Activated B cell treated with CpG ODN at 0.5 μM for 24 hours (primary cell): ENCODE measurements at regions of chr2 and their contacts with region 1.

Region 1: DNA sequence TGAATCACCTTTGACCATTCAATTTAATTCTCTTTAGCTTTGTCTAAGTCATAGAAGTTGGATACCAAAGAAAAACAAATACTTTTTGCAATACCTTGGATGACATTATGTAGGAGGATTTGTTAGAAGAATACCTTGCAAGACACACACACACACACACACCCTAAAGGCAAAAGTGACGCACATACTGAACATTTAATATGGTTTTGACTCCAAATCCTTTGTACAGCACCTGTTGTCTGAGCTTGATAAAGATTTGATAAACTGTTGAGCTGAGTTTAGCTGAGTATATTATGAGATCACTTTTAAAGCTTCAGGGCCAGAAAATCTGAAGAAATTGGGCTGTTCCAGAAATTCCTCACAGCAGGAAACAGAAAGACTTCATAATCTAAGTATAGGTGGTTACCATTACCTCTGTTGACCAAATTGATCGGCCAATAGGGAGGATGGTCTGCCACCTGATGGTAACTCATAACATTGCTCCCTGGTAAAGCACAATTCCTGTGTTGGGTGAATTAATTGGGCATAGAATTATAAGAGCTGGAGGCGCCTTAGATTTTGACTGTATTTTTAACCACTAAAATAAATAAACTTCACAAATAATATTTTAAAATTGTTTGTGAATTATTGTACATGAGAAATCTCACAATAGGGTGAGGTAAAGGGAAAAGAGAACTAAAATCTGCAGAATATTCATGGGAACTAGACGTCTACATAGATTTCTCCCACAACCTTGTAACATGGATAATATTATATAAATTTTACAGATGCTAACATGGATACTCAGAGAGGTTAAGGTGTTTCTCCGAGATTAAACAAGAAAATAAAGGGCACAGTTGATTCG is 21.9 kb upstream of the RPIA start:
- DNase-seq: no peak
- ATAC-seq: peak; percentile 88
- H3K4me3 Mint-ChIP-seq: no peak overlapping the region
- H3K27ac Mint-ChIP-seq: no peak overlapping the region
- H3K4me1 Mint-ChIP-seq: peaks cover 5% of the 10 kb centered on the region
- H3K27me3 Mint-ChIP-seq: no peaks in the 10 kb centered on the region
- CTCF ChIP-seq: no peak

Region 2: DNA sequence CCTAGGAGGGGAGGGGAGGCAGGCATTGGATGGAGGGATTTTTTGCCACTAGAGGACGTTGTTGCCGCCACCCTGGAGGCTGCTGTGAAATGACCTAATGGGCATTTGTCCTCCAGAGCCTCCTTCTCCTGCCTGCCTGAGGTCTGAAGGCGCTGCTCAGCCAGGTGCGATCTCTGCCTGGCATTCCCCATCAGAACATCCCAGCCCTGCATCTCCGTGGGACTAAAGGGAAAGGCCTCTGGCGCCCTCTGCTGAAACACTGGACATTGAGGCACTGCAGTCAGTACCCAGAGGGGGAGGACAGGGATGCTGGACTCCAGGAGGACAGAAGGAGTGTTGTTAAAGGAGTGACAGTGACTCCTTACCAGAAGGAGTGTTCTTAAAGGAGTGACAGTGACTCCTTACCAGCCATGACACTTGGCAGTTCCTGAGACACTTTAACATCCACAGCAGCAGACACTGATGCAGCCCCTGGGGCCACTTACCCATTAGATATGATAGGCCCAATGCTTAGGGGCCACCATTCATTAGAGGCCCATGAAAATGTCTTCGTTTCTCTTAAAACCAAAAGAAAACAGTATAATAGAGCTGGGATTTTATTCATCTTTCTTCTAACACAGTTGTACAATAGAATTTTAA is 482.4 kb before region 1 on chr2:
- CTCF ChIA-PET with region 1: no interaction called
- POLR2A ChIA-PET with region 1: no interaction called
- intact Hi-C with region 1: loop called (anchors 2 kb)
- DNase-seq: no peak
- ATAC-seq: peak; percentile 50
- H3K4me3 Mint-ChIP-seq: no peak overlapping the region
- H3K27ac Mint-ChIP-seq: no peak overlapping the region
- H3K4me1 Mint-ChIP-seq: peaks cover 14% of the 10 kb centered on the region
- H3K27me3 Mint-ChIP-seq: peaks cover 17% of the 10 kb centered on the region
- CTCF ChIP-seq: no peak

Region 3: DNA sequence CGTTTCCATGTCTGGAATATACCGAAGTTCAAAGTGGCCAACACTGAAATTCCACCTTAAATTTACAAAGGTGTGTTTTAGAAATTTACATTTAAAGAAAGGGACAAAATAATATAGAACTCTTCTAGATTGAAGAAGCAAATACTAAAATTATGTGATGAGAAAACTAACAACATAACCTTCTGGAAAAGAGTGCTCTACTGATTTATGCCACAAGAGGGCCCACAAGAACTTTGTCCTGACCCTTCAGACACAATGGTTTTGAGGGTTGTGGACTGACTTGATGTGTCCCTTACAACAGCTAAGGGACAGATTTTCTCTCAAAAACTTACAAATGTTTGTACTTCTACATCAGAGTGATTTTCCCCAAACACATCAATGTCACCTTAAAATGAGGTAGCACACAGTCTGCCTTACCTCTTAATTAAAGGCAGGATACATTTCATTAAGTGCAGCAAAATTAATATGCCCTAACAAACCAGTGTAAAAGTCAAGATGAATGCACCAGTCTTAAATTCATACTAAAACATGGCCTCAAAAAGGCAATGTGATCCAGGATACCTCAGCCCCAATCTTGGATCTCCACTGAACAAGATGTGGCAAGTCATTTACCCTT is 78.5 kb before region 1 on chr2:
- CTCF ChIA-PET with region 1: interaction called, 281 read pairs
- POLR2A ChIA-PET with region 1: interaction called, 5 read pairs
- intact Hi-C with region 1: loop called (anchors 1 kb)
- DNase-seq: no peak
- ATAC-seq: peak; percentile 88
- H3K4me3 Mint-ChIP-seq: no peak overlapping the region
- H3K27ac Mint-ChIP-seq: peak overlapping the region; percentile 70
- H3K4me1 Mint-ChIP-seq: peaks cover 25% of the 10 kb centered on the region
- H3K27me3 Mint-ChIP-seq: no peaks in the 10 kb centered on the region
- CTCF ChIP-seq: peak; percentile 35

Region 4: GRCh38 chr2:88600038-88600465 is 69.5 kb before region 1 on chr2:
- CTCF ChIA-PET with region 1: interaction called, 281 read pairs
- POLR2A ChIA-PET with region 1: interaction called, 3 read pairs
- intact Hi-C with region 1: no loop called
- DNase-seq: no peak
- ATAC-seq: peak; percentile 94
- H3K4me3 Mint-ChIP-seq: peak overlapping the region; percentile 67
- H3K27ac Mint-ChIP-seq: peak overlapping the region; percentile 90
- H3K4me1 Mint-ChIP-seq: peaks cover 89% of the 10 kb centered on the region
- H3K27me3 Mint-ChIP-seq: no peaks in the 10 kb centered on the region
- CTCF ChIP-seq: no peak

Region 5: GRCh38 chr2:88659538-88659916 is 10.1 kb before region 1 on chr2:
- CTCF ChIA-PET with region 1: interaction called, 11 read pairs
- POLR2A ChIA-PET with region 1: no interaction called
- intact Hi-C with region 1: no loop called
- DNase-seq: no peak
- ATAC-seq: no peak
- H3K4me3 Mint-ChIP-seq: no peak overlapping the region
- H3K27ac Mint-ChIP-seq: no peak overlapping the region
- H3K4me1 Mint-ChIP-seq: no peaks in the 10 kb centered on the region
- H3K27me3 Mint-ChIP-seq: no peaks in the 10 kb centered on the region
- CTCF ChIP-seq: no peak

Region 6: DNA sequence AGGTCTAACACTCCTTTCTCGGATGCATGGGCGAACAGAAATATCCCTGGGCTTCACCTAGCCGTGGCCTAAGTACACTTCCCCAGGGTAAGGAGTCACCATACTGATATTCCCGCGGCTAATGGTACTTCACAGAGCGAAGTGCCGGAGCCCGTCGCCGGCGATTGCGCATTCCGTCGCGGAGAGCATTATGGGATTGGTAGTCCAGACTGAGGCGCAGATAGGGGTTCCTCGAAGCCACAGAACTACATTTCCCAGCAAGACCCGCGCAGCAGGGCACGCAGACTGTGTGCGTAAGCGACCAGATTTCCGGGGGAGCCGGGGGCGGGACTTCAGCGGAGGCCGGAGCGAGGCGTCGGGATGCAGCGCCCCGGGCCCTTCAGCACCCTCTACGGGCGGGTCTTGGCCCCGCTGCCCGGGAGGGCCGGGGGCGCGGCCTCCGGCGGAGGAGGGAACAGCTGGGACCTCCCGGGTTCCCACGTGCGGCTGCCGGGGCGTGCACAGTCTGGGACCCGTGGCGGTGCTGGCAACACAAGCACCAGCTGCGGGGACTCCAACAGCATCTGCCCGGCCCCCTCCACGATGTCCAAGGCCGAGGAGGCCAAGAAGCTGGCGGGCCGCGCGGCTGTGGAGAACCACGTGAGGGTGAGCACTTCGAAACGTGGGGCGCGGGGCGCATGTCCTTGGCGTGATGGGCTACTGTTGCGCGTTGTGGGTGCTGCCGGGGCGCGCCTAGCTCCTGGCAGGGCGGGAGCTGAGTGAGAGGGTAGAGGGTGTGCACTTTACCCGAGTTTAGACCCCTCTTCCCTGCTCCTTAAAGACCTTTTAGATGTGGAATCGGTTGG is 22.0 kb after region 1 on chr2 and contains the start of gene RPIA:
- CTCF ChIA-PET with region 1: interaction called, 10 read pairs
- POLR2A ChIA-PET with region 1: interaction called, 3 read pairs
- intact Hi-C with region 1: loop called (anchors 1 kb)
- DNase-seq: peak; percentile 94
- ATAC-seq: peak; percentile 94
- H3K4me3 Mint-ChIP-seq: peak within 1 kb of the TSS; percentile 96
- H3K27ac Mint-ChIP-seq: peak within 1 kb of the TSS; percentile 86
- H3K4me1 Mint-ChIP-seq: peaks cover 44% of the 10 kb centered on the region
- H3K27me3 Mint-ChIP-seq: no peaks in the 10 kb centered on the region
- CTCF ChIP-seq: no peak
- total RNA-seq, gene RPIA: 34.9 and 35.9 TPM in 2 replicates